ENCODE measurements at regions of chr11 and their contacts with region 1.

Region 1: DNA sequence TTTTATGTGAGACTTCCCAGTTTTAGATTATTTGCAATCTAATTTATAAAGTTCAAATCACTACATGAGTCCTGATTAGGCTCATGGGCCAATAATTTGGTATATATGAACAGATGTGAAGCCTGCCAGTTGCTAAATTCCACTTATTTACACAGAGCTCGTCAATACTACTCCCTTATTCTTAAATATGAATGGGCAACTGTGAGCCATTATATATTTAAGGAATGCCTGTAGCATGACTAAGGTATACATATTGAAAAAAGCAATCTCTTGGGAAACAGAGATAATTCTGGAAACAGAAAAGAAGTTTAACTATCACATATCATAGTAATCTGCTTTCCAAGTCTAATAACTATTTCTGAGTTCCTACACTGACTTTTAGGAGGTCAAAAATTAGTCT is 27.0 kb downstream of the RBMXL2 start:
- DNase-seq: no peak

Region 2: GRCh38 chr11:7321473-7322450 is 206.0 kb after region 1 on chr11:
- in situ Hi-C with region 1: no loop called
- DNase-seq: no peak

Region 3: GRCh38 chr11:7665473-7666291 is 549.9 kb after region 1 on chr11:
- in situ Hi-C with region 1: loop called (anchors 25 kb)
- DNase-seq: peak; percentile 73